Activated CD4-positive, alpha-beta T cell treated with anti-CD3 and anti-CD28 coated beads, Interleukin-2, amount 10 ng/mL, durations not matched to agents 24 days and 14 days (primary cell): ENCODE measurements at regions of chr19 and their contacts with region 1.

Region 1: GRCh38 chr19:51158474-51159129 is 16.5 kb downstream of the SIGLEC7 start:
- DNase-seq: peak; percentile 94
- H3K4me3 Mint-ChIP-seq: no peak overlapping the region
- H3K27ac Mint-ChIP-seq: peak overlapping the region; percentile 56
- H3K4me1 Mint-ChIP-seq: peaks cover 13% of the 10 kb centered on the region
- H3K27me3 Mint-ChIP-seq: peaks cover 13% of the 10 kb centered on the region

Region 2: GRCh38 chr19:51034718-51035117 is 123.9 kb before region 1 on chr19 and contains the start of gene KLK12:
- intact Hi-C with region 1: no loop called
- DNase-seq: no peak
- H3K4me3 Mint-ChIP-seq: no peak within 1 kb of the TSS
- H3K27ac Mint-ChIP-seq: no peak within 1 kb of the TSS
- H3K4me1 Mint-ChIP-seq: no peaks in the 10 kb centered on the region
- H3K27me3 Mint-ChIP-seq: no peaks in the 10 kb centered on the region
- total RNA-seq, gene KLK12: not detected in 2 replicates

Region 3: GRCh38 chr19:51168564-51169282 is 10.1 kb after region 1 on chr19:
- intact Hi-C with region 1: loop called (anchors 1 kb)
- DNase-seq: no peak
- H3K4me3 Mint-ChIP-seq: peak overlapping the region; percentile 9
- H3K27ac Mint-ChIP-seq: no peak overlapping the region
- H3K4me1 Mint-ChIP-seq: peaks cover 26% of the 10 kb centered on the region
- H3K27me3 Mint-ChIP-seq: peaks cover 15% of the 10 kb centered on the region

Region 4: DNA sequence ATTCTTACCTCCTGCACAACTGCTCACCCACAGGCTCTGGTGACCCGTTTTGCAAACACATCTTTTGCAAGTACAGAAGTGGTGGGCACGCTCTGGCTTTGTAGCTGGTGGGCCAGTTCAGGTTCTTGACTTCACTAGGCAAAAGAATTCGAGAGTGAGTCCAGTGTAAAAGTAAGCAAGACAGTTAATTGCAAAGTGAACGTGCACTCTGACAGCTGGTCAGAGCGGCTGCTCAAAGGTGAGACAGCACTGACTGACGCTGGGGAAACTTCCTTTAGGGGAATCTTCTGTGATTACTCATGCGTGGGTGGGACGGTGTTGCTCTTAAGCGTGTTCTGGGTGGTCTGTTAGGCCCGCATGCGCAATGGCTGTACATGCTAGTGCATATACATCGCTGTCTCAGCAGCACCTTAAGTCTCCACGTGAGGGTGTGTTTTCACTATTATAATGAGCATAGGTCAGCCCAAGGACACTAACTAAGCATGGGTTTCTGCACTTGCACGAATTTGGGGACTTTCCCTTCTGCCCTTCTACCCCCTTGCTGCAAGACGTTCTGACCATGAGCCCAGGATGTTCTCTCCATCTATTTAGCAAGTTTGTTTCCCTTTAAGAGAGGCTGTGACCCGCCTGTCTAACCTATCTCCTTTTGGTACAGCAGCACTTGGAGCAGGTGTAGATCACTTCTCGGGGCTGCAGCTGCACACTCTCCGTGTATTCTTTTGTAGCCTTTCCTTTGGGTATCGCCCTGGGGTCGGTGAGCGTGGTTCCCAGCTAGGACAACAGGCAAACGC is 36.1 kb after region 1 on chr19:
- intact Hi-C with region 1: no loop called
- DNase-seq: no peak
- H3K4me3 Mint-ChIP-seq: no peak overlapping the region
- H3K27ac Mint-ChIP-seq: no peak overlapping the region
- H3K4me1 Mint-ChIP-seq: peaks cover 5% of the 10 kb centered on the region
- H3K27me3 Mint-ChIP-seq: no peaks in the 10 kb centered on the region

Region 5: GRCh38 chr19:51246164-51246552 is 87.6 kb after region 1 on chr19:
- intact Hi-C with region 1: no loop called
- DNase-seq: peak; percentile 65
- H3K4me3 Mint-ChIP-seq: peak overlapping the region; percentile 25
- H3K27ac Mint-ChIP-seq: peak overlapping the region; percentile 14
- H3K4me1 Mint-ChIP-seq: peaks cover 31% of the 10 kb centered on the region
- H3K27me3 Mint-ChIP-seq: no peaks in the 10 kb centered on the region

Region 6: GRCh38 chr19:51259348-51260245 is 101.0 kb after region 1 on chr19:
- intact Hi-C with region 1: loop called (anchors 1 kb)
- DNase-seq: peak; percentile 89
- H3K4me3 Mint-ChIP-seq: no peak overlapping the region
- H3K27ac Mint-ChIP-seq: no peak overlapping the region
- H3K4me1 Mint-ChIP-seq: peaks cover 33% of the 10 kb centered on the region
- H3K27me3 Mint-ChIP-seq: peaks cover 16% of the 10 kb centered on the region

Region 7: GRCh38 chr19:51660975-51661600 is 502.5 kb after region 1 on chr19:
- intact Hi-C with region 1: loop called (anchors 2 kb)
- DNase-seq: peak; percentile 84
- H3K4me3 Mint-ChIP-seq: no peak overlapping the region
- H3K27ac Mint-ChIP-seq: no peak overlapping the region
- H3K4me1 Mint-ChIP-seq: peaks cover 5% of the 10 kb centered on the region
- H3K27me3 Mint-ChIP-seq: peaks cover 23% of the 10 kb centered on the region